Caco-2 (cell line): ENCODE measurements at regions of chr7 and their contacts with region 1.

Region 1: GRCh38 chr7:44606450-44607254 is at the start of gene OGDH:
- DNase-seq: peak; percentile 98 to 99
- H3K4me3 ChIP-seq: peak within 1 kb of the TSS; percentile 76
- H3K4me3 Mint-ChIP-seq: peak within 1 kb of the TSS; percentile 91
- H3K27ac Mint-ChIP-seq: peak within 1 kb of the TSS; percentile 97
- H3K4me1 ChIP-seq: peaks cover 16% of the 10 kb centered on the region
- H3K4me1 Mint-ChIP-seq: peaks cover 22% of the 10 kb centered on the region
- H3K27me3 ChIP-seq: no peaks in the 10 kb centered on the region
- H3K27me3 Mint-ChIP-seq: no peaks in the 10 kb centered on the region
- CTCF ChIP-seq: no peak
- total RNA-seq, gene OGDH: 62.1 and 64.5 TPM in 2 replicates

Region 2: DNA sequence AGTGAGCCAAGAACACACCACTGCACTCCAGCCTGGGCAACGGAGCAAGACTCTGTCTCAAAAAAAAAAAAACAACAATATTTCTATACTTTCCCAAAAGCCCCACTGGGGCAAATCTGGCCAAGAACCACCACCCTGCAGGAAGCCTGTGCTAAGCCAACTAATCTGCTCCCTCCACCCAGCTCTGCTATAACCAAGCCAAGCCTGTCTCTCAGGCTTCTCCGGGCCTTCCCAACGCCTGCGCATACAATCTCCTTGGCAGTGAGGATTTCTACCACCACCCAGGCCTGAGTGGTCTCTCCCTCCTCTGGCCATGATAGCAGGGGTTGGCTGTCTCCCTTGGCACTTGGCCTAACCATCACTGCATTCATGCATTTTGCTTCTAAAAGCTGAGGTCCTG is 47.2 kb before region 1 on chr7:
- CTCF ChIA-PET with region 1: no interaction called
- POLR2A ChIA-PET with region 1: no interaction called
- intact Hi-C with region 1: no loop called
- DNase-seq: no peak
- H3K4me3 ChIP-seq: no peak overlapping the region
- H3K4me3 Mint-ChIP-seq: no peak overlapping the region
- H3K27ac Mint-ChIP-seq: peak overlapping the region; percentile 58
- H3K4me1 ChIP-seq: peaks cover 27% of the 10 kb centered on the region
- H3K4me1 Mint-ChIP-seq: peaks cover 13% of the 10 kb centered on the region
- H3K27me3 ChIP-seq: no peaks in the 10 kb centered on the region
- H3K27me3 Mint-ChIP-seq: no peaks in the 10 kb centered on the region
- CTCF ChIP-seq: no peak

Region 3: DNA sequence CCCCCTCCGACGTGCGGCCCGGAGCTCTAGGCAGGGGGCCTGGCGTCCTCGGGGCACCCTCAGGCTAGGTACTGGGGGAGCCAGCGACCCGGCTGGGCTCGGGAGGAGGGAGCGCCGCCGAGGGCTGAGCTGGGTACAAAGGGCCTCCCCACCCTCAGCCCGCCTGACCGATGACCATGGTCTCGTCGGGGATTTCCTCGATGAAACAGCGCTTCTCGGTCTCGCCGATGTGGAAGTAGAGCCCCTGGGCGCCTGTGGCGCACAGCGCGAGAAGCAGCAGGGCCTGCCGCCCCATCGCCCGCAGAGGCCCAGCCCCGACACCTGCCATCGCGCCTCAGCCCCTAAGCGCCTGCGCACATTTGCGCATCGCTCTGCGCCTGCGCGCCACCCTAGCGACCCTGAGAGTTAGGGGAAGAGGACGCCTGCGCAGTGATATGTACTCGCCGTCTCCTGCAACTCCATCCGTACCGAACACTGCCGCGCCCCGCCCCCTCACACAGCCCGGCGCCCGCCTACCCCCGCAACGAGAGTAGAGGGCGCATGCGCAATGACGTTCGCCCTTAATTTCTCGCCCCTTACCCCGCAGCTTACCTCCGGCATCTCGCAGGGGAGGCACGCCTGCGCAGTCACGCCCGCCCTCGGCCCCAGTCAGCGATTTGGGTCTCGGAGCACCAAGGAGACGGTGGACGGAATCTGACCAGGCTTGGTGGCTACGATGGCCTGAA is 24.6 kb before region 1 on chr7 and contains the start of gene TMED4:
- CTCF ChIA-PET with region 1: no interaction called
- POLR2A ChIA-PET with region 1: interaction called, 17 read pairs
- intact Hi-C with region 1: loop called (anchors 1 kb)
- DNase-seq: peak; percentile 99 to 100
- H3K4me3 ChIP-seq: peak within 1 kb of the TSS; percentile 80
- H3K4me3 Mint-ChIP-seq: peak within 1 kb of the TSS; percentile 86
- H3K27ac Mint-ChIP-seq: peak within 1 kb of the TSS; percentile 96
- H3K4me1 ChIP-seq: peaks cover 13% of the 10 kb centered on the region
- H3K4me1 Mint-ChIP-seq: peaks cover 7% of the 10 kb centered on the region
- H3K27me3 ChIP-seq: no peaks in the 10 kb centered on the region
- H3K27me3 Mint-ChIP-seq: no peaks in the 10 kb centered on the region
- CTCF ChIP-seq: no peak
- total RNA-seq, gene TMED4: 93.4 and 96.6 TPM in 2 replicates

Region 4: GRCh38 chr7:44633254-44634186 is 26.9 kb after region 1 on chr7:
- CTCF ChIA-PET with region 1: interaction called, 3 read pairs
- POLR2A ChIA-PET with region 1: interaction called, 21 read pairs
- intact Hi-C with region 1: loop called (anchors 1 kb)
- DNase-seq: no peak
- H3K4me3 ChIP-seq: no peak overlapping the region
- H3K4me3 Mint-ChIP-seq: no peak overlapping the region
- H3K27ac Mint-ChIP-seq: peak overlapping the region; percentile 91
- H3K4me1 ChIP-seq: peaks cover 52% of the 10 kb centered on the region
- H3K4me1 Mint-ChIP-seq: peaks cover 59% of the 10 kb centered on the region
- H3K27me3 ChIP-seq: no peaks in the 10 kb centered on the region
- H3K27me3 Mint-ChIP-seq: no peaks in the 10 kb centered on the region
- CTCF ChIP-seq: no peak

Region 5: GRCh38 chr7:44665531-44666213 is 59.0 kb after region 1 on chr7:
- CTCF ChIA-PET with region 1: no interaction called
- POLR2A ChIA-PET with region 1: no interaction called
- intact Hi-C with region 1: no loop called
- DNase-seq: no peak
- H3K4me3 ChIP-seq: no peak overlapping the region
- H3K4me3 Mint-ChIP-seq: no peak overlapping the region
- H3K27ac Mint-ChIP-seq: no peak overlapping the region
- H3K4me1 ChIP-seq: no peaks in the 10 kb centered on the region
- H3K4me1 Mint-ChIP-seq: no peaks in the 10 kb centered on the region
- H3K27me3 ChIP-seq: no peaks in the 10 kb centered on the region
- H3K27me3 Mint-ChIP-seq: no peaks in the 10 kb centered on the region
- CTCF ChIP-seq: no peak

Region 6: DNA sequence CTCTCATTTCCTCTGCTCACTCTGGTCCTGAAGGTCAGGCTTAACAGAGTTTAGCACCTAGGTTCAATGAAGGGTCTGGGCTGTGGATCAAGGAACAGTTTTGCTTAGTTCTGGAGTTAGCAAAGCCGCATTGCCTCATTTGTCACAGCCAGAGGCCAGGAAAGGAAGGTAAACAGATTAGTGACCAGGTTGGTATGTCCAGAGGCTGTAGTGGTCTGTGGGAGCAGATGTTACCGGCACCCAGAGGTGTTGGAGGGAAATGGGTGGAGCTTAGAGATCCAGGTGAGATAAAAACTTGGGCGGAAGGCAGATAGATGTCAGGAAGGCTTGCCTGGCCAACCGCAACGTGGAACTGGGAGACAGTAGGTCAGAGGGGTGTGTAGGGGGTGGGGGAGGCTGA is 105.4 kb after region 1 on chr7:
- CTCF ChIA-PET with region 1: no interaction called
- POLR2A ChIA-PET with region 1: no interaction called
- intact Hi-C with region 1: no loop called
- DNase-seq: peak; percentile 65 to 77
- H3K4me3 ChIP-seq: no peak overlapping the region
- H3K4me3 Mint-ChIP-seq: peak overlapping the region; percentile 4
- H3K27ac Mint-ChIP-seq: peak overlapping the region; percentile 33
- H3K4me1 ChIP-seq: peaks cover 16% of the 10 kb centered on the region
- H3K4me1 Mint-ChIP-seq: peaks cover 20% of the 10 kb centered on the region
- H3K27me3 ChIP-seq: no peaks in the 10 kb centered on the region
- H3K27me3 Mint-ChIP-seq: no peaks in the 10 kb centered on the region
- CTCF ChIP-seq: no peak

Region 7: DNA sequence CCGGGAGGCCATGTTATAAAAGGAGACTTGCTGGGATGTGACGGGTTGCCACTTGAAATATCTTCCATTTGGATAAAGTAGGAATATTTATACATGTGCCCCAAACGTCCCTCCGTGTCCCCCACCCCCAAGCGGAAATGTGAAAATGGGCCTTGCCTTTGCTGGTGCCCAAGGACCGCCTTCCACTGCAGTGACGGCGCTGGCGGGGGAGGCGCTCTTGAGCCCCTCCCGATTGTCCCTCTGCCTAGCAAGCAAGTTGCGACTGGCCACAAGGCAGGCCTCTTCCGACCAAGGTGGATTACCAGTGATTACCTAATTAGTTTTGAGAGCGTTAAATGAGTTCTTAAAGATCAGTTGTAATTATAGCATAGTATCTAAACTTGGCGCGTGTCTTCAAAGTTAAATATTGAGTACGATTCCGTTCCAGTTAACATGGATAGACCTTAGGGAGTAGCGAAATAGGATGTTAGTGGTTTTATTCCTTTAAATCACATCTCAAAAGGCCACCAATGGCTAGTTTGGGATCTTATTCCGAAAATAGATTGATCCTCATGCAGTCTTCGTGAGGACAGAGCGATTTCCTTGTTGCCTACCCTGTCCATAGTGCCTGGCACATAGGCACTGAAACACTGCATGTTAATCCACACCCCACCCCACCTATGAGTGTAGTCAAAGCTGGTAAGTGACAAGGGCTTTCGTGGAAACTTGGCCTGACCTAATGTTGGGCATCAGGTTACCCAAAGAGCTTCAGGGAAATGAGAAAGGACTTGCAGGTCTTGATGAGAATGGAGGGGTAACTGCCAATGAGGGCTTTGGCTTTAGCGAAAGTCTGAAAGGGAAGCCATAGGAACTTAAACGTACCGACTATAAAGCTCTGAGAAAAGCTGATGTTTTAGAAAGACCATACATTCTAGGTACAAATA is 190.9 kb after region 1 on chr7:
- CTCF ChIA-PET with region 1: no interaction called
- POLR2A ChIA-PET with region 1: interaction called, 4 read pairs
- intact Hi-C with region 1: loop called (anchors 5 kb)
- DNase-seq: peak; percentile 90
- H3K4me3 ChIP-seq: peak overlapping the region; percentile 100
- H3K4me3 Mint-ChIP-seq: peak overlapping the region; percentile 97
- H3K27ac Mint-ChIP-seq: peak overlapping the region; percentile 99
- H3K4me1 ChIP-seq: 0 out of 2 replicates have a peak, but pooled peaks cover 10% of the 10 kb centered on the region
- H3K4me1 Mint-ChIP-seq: no peaks in the 10 kb centered on the region
- H3K27me3 ChIP-seq: no peaks in the 10 kb centered on the region
- H3K27me3 Mint-ChIP-seq: no peaks in the 10 kb centered on the region
- CTCF ChIP-seq: peak; percentile 67 to 71